ENCODE measurements at regions of chr15 and their contacts with region 1.

Region 1: GRCh38 chr15:58641660-58642059 is 107.8 kb downstream of the ADAM10 start:
- DNase-seq: no peak
- ATAC-seq: no peak
- H3K4me3 ChIP-seq: no peak overlapping the region
- H3K27ac ChIP-seq: no peak overlapping the region
- H3K4me1 ChIP-seq: no peaks in the 10 kb centered on the region
- H3K27me3 ChIP-seq: no peaks in the 10 kb centered on the region
- CTCF ChIP-seq: no peak

Region 2: DNA sequence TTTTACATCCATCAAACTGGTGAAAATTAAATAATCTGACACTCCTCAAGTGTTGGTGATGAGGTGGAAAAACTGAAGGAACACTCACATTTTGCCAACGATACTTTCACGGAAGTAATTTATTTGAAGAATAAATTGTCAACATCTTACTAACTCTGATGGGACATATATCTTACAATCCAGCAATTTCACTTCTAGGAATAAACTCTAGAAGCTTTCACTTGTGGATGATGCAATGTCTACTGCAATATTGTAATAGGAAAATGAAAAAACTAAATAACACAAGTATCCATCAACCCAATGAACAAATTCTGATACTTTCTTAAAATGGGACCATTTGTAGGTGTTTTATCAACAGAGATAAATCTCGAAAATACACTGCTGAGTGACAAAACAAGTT is 226.0 kb before region 1 on chr15:
- CTCF ChIA-PET with region 1: interaction called, 12 read pairs
- POLR2A ChIA-PET with region 1: no interaction called
- in situ Hi-C with region 1: no loop called
- intact Hi-C with region 1: no loop called
- DNase-seq: no peak
- ATAC-seq: no peak
- H3K4me3 ChIP-seq: no peak overlapping the region
- H3K27ac ChIP-seq: no peak overlapping the region; the same call in 1 of the 2 replicates
- H3K4me1 ChIP-seq: no peaks in the 10 kb centered on the region
- H3K27me3 ChIP-seq: no peaks in the 10 kb centered on the region
- CTCF ChIP-seq: no peak

Region 3: GRCh38 chr15:58521293-58521991 is 120.2 kb before region 1 on chr15:
- CTCF ChIA-PET with region 1: no interaction called
- POLR2A ChIA-PET with region 1: no interaction called
- in situ Hi-C with region 1: no loop called
- intact Hi-C with region 1: no loop called
- DNase-seq: no peak
- ATAC-seq: no peak
- H3K4me3 ChIP-seq: no peak overlapping the region
- H3K27ac ChIP-seq: no peak overlapping the region
- H3K4me1 ChIP-seq: peaks cover 4% of the 10 kb centered on the region; the same call in 1 of the 2 replicates
- H3K27me3 ChIP-seq: no peaks in the 10 kb centered on the region; the same call in 1 of the 2 replicates
- CTCF ChIP-seq: no peak

Measured in Panc1 (cell line).